CD8-positive, alpha-beta memory T cell (primary cell): ENCODE measurements at regions of chr20 and their contacts with region 1.

Region 1: DNA sequence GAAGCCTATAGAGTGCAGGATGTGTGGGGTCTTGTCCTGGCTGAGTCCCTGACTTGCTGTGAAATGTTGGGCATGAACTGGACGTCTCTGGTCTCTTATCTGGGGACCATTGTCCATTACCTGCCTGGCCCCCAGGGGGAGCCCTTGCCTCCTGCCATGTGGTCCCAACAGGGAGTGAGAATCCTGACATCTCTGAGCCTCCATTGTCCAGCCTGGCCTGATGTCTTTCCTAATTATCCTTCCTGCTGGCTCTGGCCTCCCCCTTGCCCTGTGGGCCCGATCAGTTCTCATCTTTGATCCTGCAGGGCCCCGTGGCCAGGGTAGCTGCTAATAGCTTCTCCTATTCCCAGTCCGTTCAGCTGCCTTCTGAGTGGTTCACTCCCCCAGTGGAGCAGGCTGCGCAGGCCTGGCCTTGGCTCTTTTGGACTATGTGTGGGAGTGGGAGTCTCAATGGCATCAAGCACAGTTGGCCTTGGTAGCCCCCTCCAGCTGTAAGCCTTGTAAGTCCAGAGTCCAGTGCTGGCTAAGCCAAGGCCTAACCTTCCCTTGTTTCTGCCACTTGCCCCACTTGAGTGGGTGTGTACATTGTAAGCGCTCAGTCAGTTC is 77.9 kb upstream of the RALY start:
- DNase-seq: peak; percentile 29 to 70 (median 45)
- H3K4me3 ChIP-seq: no peak overlapping the region
- H3K4me3 Mint-ChIP-seq: no peak overlapping the region
- H3K27ac ChIP-seq: no peak overlapping the region
- H3K27ac Mint-ChIP-seq: no peak overlapping the region
- H3K4me1 ChIP-seq: no peaks in the 10 kb centered on the region
- H3K4me1 Mint-ChIP-seq: peaks cover 0 to 15% (median 0%) of the 10 kb centered on the region in 3 donors
- H3K27me3 ChIP-seq: no peaks in the 10 kb centered on the region
- H3K27me3 Mint-ChIP-seq: peaks cover 0 to 11% of the 10 kb centered on the region in 2 donors

Region 2: GRCh38 chr20:33875055-33875454 is 40.8 kb before region 1 on chr20:
- CTCF ChIA-PET with region 1: no interaction called
- POLR2A ChIA-PET with region 1: no interaction called
- DNase-seq: no peak
- H3K4me3 ChIP-seq: no peak overlapping the region
- H3K4me3 Mint-ChIP-seq: no peak overlapping the region
- H3K27ac ChIP-seq: no peak overlapping the region
- H3K27ac Mint-ChIP-seq: peak overlapping the region in 1 of 8 donors; percentile 75
- H3K4me1 ChIP-seq: no peaks in the 10 kb centered on the region
- H3K4me1 Mint-ChIP-seq: no peaks in the 10 kb centered on the region
- H3K27me3 ChIP-seq: no peaks in the 10 kb centered on the region
- H3K27me3 Mint-ChIP-seq: peaks cover 0 to 5% of the 10 kb centered on the region in 2 donors

Region 3: GRCh38 chr20:34069341-34070078 is 153.7 kb after region 1 on chr20:
- CTCF ChIA-PET with region 1: interaction called, 45 read pairs
- POLR2A ChIA-PET with region 1: no interaction called
- DNase-seq: peak; percentile 24 to 69 (median 39)
- H3K4me3 ChIP-seq: no peak overlapping the region
- H3K4me3 Mint-ChIP-seq: no peak overlapping the region
- H3K27ac ChIP-seq: no peak overlapping the region
- H3K27ac Mint-ChIP-seq: peak overlapping the region in 7 of 8 donors; percentile 37 to 78 (median 68)
- H3K4me1 ChIP-seq: peaks cover 13% of the 10 kb centered on the region
- H3K4me1 Mint-ChIP-seq: peaks cover 39 to 60% (median 52%) of the 10 kb centered on the region in 3 donors
- H3K27me3 ChIP-seq: no peaks in the 10 kb centered on the region
- H3K27me3 Mint-ChIP-seq: no peaks in the 10 kb centered on the region

Region 4: GRCh38 chr20:34129518-34130162 is 213.8 kb after region 1 on chr20:
- CTCF ChIA-PET with region 1: interaction called, 14 read pairs
- POLR2A ChIA-PET with region 1: no interaction called
- DNase-seq: peak; percentile 17 to 69 (median 58)
- H3K4me3 ChIP-seq: no peak overlapping the region
- H3K4me3 Mint-ChIP-seq: peak overlapping the region in 2 of 7 donors; percentile 25 to 46
- H3K27ac ChIP-seq: no peak overlapping the region
- H3K27ac Mint-ChIP-seq: peak overlapping the region in 1 of 8 donors; percentile 74
- H3K4me1 ChIP-seq: no peaks in the 10 kb centered on the region
- H3K4me1 Mint-ChIP-seq: peaks cover 3 to 4% (median 3%) of the 10 kb centered on the region in 3 donors
- H3K27me3 ChIP-seq: no peaks in the 10 kb centered on the region
- H3K27me3 Mint-ChIP-seq: peaks cover 2 to 13% of the 10 kb centered on the region in 2 donors